ENCODE measurements at regions of chr11 and their contacts with region 1.

Region 1: GRCh38 chr11:62309991-62310390 is 11.1 kb upstream of the SCGB1D4 start:
- DNase-seq: no peak
- ATAC-seq: no peak
- H3K4me3 ChIP-seq: no peak overlapping the region
- H3K27ac ChIP-seq: no peak overlapping the region
- H3K4me1 ChIP-seq: no peaks in the 10 kb centered on the region
- CTCF ChIP-seq: no peak
- EP300 ChIP-seq: no peak
- POLR2A ChIP-seq: no peak
- RAD21 ChIP-seq: no peak

Region 2: GRCh38 chr11:62169091-62169847 is 140.7 kb before region 1 on chr11:
- CTCF ChIA-PET with region 1: interaction called, 21 read pairs
- POLR2A ChIA-PET with region 1: no interaction called
- DNase-seq: no peak
- ATAC-seq: no peak
- H3K4me3 ChIP-seq: no peak overlapping the region
- H3K27ac ChIP-seq: no peak overlapping the region
- H3K4me1 ChIP-seq: no peaks in the 10 kb centered on the region; the same call in 2 of the 3 replicates
- CTCF ChIP-seq: no peak
- EP300 ChIP-seq: no peak
- POLR2A ChIP-seq: no peak
- RAD21 ChIP-seq: no peak

Region 3: DNA sequence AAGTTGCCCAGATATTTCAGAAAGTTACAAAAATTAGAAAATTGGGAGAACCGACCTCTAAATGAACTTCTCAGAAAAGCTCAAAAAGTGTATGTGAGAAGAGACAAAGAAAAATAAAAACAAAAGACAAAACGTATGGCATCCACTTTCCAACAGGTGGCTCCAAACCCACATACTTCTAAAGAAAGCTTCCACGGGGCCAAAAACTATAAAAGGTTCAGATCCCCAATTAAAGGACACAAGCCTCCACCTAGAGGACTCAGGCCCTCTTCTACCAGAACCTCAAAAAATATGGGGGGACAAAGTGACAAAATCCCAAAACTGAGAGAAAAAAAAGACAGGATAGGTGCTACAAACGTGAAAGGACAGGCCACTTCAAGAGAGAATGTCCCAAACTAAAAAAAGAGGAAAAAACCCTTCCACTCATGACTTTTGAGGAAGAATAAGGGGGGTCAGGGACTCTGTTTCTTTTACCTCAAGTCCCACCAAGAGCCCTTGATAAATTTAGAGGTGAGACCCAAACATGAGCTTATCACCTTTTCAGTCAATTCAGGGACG is 92.7 kb before region 1 on chr11:
- CTCF ChIA-PET with region 1: interaction called, 11 read pairs
- POLR2A ChIA-PET with region 1: no interaction called
- DNase-seq: peak in 1 of 2 experiments; percentile 46
- ATAC-seq: peak; percentile 24 to 56; a peak in 2 of 6 replicates
- H3K4me3 ChIP-seq: no peak overlapping the region
- H3K27ac ChIP-seq: no peak overlapping the region
- H3K4me1 ChIP-seq: no peaks in the 10 kb centered on the region
- CTCF ChIP-seq: peak; percentile 76
- EP300 ChIP-seq: no peak
- POLR2A ChIP-seq: no peak
- RAD21 ChIP-seq: peak; percentile 82 to 84

Region 4: GRCh38 chr11:62298975-62299374 is 11.0 kb before region 1 on chr11 and contains the start of gene SCGB1D4:
- CTCF ChIA-PET with region 1: interaction called, 56 read pairs
- POLR2A ChIA-PET with region 1: no interaction called
- DNase-seq: no peak
- ATAC-seq: no peak
- H3K4me3 ChIP-seq: no peak within 1 kb of the TSS
- H3K27ac ChIP-seq: no peak within 1 kb of the TSS
- H3K4me1 ChIP-seq: no peaks in the 10 kb centered on the region
- CTCF ChIP-seq: no peak
- EP300 ChIP-seq: no peak
- POLR2A ChIP-seq: no peak
- RAD21 ChIP-seq: no peak
- polyA plus RNA-seq, gene SCGB1D4: not detected in 2 replicates

Region 5: DNA sequence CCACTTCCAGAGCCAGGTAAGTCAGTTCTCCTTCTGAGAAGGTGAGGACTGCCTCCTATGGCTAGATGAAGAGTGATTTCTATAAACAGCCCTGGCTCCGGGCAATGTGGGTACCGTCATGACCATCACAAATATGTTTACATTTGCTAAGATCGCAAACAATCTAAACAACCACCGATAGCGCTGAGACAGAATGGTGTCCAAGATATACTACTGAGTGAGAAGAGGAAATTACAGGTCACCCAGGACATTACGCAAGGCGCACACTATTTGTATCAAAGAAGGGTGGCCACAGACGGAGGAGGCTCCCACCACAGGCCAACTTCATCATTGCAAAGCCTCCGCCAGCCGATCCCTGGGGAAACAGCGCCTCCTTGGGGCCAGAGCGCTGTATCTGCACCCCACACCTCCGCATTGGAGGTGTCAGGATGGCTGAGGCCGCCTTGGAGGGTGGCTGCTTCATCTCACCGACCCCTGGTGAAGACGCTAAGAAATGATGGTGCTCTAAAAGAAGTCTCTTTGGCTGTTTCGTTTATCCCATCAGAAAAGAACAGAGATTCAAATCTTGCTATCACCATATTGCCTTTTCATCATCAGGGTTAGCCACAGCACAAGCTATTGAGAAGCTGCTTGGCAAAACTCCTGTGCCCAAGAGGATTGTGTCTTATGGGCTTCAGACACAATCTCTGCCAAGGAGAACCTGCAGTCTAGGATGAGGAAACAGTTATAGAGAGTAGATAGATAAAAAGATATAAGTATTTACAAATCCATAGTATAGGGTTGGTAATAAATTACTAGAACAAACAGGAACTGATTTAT is 15.0 kb after region 1 on chr11:
- CTCF ChIA-PET with region 1: interaction called, 41 read pairs
- POLR2A ChIA-PET with region 1: no interaction called
- DNase-seq: peak; percentile 15 to 52
- ATAC-seq: peak; percentile 66 to 94
- H3K4me3 ChIP-seq: no peak overlapping the region
- H3K27ac ChIP-seq: no peak overlapping the region; a peak in 1 of 6 replicates
- H3K4me1 ChIP-seq: peaks cover 18% of the 10 kb centered on the region
- CTCF ChIP-seq: no peak
- EP300 ChIP-seq: no peak
- POLR2A ChIP-seq: no peak
- RAD21 ChIP-seq: peak in 1 of 2 experiments; percentile 53; a peak in 2 of 5 replicates

Region 6: DNA sequence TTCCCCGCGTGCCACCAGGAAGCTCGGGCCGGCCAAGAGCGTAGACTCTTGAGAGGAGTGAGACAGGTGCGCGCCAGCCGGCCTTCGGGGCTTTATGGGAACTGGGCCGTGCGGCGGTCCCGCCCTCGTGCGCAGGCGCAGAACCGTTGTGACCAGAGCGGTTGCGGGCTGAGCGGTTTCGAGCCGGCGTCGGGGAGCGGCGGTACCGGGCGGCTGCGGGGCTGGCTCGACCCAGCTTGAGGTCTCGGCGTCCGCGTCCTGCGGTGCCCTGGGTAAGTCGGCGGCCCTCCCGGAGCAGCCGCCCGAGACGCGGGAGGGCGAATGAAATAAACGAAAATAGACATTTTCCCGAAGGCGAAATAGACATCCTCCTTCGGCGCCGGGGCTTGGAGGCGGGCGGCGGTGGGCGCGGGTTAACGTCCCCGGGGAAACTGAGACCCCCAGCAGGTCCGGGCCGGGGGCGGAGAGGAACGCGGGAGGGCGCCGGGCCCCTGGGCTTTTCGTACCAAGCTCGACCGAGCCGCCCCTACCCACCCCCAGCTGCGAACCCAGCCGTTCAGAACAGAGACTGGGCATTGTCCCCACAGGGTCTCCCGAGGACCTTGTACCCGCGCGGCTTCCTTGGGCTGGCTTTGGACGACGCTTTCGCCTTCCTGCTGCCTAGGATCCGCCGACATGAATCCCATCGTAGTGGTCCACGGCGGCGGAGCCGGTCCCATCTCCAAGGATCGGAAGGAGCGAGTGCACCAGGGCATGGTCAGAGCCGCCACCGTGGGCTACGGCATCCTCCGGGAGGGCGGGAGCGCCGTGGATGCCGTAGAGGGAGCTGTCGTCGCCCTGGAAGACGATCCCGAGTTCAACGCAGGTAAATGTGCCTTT is 27.6 kb after region 1 on chr11 and contains the start of gene ASRGL1:
- CTCF ChIA-PET with region 1: interaction called, 17 read pairs
- POLR2A ChIA-PET with region 1: no interaction called
- DNase-seq: peak; percentile 82 to 87
- ATAC-seq: peak; percentile 89 to 95
- H3K4me3 ChIP-seq: peak within 1 kb of the TSS; percentile 79
- H3K27ac ChIP-seq: peak within 1 kb of the TSS; percentile 76 to 88
- H3K4me1 ChIP-seq: no peaks in the 10 kb centered on the region
- CTCF ChIP-seq: no peak
- EP300 ChIP-seq: no peak
- POLR2A ChIP-seq: peak; percentile 50
- RAD21 ChIP-seq: no peak
- polyA plus RNA-seq, gene ASRGL1: 13.6 and 19.5 TPM in 2 replicates

Region 7: GRCh38 chr11:62431171-62431901 is 121.3 kb after region 1 on chr11:
- CTCF ChIA-PET with region 1: no interaction called
- POLR2A ChIA-PET with region 1: no interaction called
- DNase-seq: peak in 1 of 2 experiments; percentile 42
- ATAC-seq: peak; percentile 63 to 67
- H3K4me3 ChIP-seq: no peak overlapping the region
- H3K27ac ChIP-seq: peak overlapping the region; percentile 47 to 86; a peak in 5 of 6 replicates
- H3K4me1 ChIP-seq: peaks cover 54% of the 10 kb centered on the region
- CTCF ChIP-seq: no peak
- EP300 ChIP-seq: no peak
- POLR2A ChIP-seq: no peak
- RAD21 ChIP-seq: no peak